HEK293 (cell line): ENCODE measurements at regions of chrX and their contacts with region 1.

Region 1: DNA sequence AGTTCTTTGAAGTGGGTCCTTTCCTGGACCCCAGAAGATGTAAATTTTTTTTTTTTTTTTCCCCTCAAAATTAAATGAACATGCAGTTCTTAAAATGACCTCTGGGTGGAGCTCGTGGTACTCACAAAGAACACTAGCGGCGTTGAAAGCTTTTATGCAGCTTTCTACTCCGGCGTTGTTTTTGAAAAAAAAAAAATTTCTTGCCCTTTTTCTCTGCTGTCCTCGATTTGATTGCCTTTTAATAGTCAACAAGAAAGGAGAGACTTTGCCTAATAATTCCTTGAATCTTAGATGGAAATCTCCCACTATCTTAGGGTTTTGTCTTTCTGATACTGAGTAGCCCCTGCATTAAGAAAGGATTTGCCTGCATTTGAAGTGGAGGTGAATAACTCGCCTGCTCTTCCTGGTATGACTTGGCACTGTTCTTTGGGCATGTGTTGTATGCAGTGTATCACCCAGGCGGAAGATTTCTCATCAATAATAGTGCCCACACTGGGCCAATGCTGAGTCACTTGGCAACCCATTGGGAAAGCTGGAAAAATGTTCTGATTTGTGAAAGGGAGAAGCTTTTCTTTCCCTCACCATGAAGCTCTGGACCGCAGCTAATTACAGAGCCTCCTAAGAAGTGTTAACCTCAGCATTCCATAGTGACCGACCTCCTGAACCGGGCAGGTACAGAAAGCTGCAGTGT is 104.0 kb downstream of the PHEX start:
- H3K4me3 ChIP-seq: no peak overlapping the region
- H3K27ac ChIP-seq: no peak overlapping the region; the same call in 1 of the 2 replicates
- H3K4me1 ChIP-seq: no peaks in the 10 kb centered on the region
- CTCF ChIP-seq: no peak

Region 2: GRCh38 chrX:21985332-21985777 is 150.8 kb before region 1 on chrX:
- CTCF ChIA-PET with region 1: interaction called, 18 read pairs
- POLR2A ChIA-PET with region 1: interaction called, 5 read pairs
- H3K4me3 ChIP-seq: no peak overlapping the region
- H3K27ac ChIP-seq: no peak overlapping the region
- H3K4me1 ChIP-seq: no peaks in the 10 kb centered on the region
- CTCF ChIP-seq: peak; percentile 78

Region 3: DNA sequence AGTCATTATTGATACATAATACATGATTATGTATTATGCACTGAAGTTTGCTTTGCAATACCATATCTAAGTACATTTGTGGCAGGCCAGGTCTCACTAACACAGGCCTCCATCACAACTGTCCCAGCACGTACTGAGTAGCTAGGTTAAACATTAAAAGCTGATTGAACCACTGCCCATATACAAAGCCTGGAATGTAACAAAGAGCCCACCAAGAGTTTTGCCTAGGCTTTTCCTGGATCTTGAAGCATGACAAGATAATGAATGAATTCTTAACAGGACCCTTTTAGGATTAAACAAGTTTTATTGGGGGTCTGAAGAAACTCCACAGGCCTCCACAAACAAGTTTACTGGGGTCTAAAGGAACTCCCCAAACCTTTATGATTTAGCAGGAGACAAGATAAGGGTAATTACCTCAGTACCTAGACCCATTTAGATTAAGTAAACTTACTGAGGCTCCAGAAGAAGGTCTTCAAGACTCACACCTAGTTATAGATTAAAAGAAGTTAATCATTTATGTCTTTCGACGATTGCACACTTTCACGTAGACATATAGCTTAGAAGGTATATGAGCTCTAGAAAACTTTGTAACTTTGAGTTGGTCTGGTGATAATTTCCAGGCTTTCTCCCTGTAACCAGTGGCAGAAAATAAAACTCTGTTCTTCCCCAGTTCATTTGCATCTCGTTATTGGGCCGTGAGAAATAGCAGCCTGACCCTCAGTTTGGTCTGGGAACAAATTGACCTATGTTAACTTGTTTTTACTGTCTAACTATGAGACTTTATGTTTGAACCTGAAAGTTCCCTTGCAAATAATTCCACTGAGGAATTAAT is 19.3 kb before region 1 on chrX:
- CTCF ChIA-PET with region 1: interaction called, 10 read pairs
- POLR2A ChIA-PET with region 1: no interaction called
- H3K4me3 ChIP-seq: no peak overlapping the region
- H3K27ac ChIP-seq: no peak overlapping the region
- H3K4me1 ChIP-seq: peaks cover 15% of the 10 kb centered on the region
- CTCF ChIP-seq: no peak

Region 4: DNA sequence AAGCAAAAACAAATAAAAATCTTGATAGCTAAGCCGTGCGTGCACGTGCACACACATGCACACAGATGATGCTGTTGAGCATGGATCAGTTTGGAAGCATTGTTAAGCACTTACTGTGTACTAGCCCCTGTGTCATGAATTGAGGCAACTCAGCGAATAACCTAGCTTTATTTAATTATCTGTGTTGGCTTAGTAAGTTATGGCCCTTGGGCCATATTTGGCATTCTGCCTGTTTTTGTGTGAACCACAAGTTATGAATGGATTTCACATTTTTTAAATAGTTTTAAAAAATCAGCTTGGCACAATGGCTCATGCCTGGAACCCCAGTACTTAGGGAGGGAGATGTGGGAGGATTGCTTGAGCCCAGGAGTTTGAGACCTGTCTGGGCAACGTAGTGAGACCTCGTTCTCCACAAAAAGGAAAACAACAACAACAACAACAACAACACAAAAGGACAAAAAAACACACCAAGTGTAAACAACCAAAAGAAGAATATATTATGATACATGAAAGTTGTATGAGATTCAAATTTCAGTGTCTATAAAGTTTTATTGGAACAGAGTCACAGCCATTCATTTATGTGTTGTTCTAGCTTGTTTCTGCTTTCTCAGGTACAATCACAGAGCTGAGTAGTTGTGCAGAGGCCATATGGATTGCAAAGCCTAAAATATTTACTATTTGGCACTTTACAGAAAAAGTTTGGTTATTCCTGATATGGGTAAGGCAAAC is 23.1 kb after region 1 on chrX:
- CTCF ChIA-PET with region 1: interaction called, 15 read pairs
- POLR2A ChIA-PET with region 1: no interaction called
- H3K4me3 ChIP-seq: no peak overlapping the region
- H3K27ac ChIP-seq: no peak overlapping the region
- H3K4me1 ChIP-seq: 0 out of 2 replicates have a peak, but pooled peaks cover 4% of the 10 kb centered on the region
- CTCF ChIP-seq: no peak